ENCODE measurements at regions of chr4 and their contacts with region 1.

Region 1: DNA sequence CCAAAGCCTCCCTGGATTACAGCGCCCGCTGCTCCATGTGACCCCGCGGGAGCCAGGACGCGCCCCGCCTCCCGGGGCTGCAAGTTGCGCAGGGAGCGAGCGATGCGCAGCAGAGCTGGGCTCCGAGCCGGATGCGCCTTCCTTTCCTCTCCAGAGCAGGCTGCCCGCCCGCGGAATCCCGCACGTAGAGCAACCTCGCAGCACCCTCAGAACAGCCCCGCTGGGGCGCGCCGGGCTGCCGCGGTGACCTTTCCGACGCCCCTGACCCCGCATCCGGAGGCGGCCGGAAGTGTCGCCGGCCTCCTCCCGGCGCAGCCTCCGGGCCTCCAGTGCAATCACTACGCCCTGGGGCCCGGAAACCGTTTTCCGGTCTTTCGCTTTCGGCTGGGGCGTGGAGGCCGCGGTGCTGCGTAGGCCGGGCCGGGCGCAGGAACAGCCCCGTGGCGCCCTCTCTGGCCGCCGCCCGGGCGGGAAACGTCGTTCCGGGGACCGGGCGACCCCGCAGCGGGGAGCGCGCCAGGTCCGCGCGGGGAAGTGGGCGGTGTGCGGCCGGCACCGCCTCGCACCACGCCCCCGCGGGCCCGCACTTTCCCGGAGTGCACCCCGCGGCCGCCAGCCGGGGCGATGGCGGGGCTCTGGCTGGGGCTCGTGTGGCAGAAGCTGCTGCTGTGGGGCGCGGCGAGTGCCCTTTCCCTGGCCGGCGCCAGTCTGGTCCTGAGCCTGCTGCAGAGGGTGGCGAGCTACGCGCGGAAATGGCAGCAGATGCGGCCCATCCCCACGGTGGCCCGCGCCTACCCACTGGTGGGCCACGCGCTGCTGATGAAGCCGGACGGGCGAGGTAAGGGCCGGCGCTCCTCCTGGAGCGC is at the start of gene CYP4V2:
- DNase-seq: peak; percentile 91
- H3K4me3 ChIP-seq: peak within 1 kb of the TSS; percentile 79 to 89 (median 82)
- H3K27ac ChIP-seq: peak within 1 kb of the TSS; percentile 93 to 99 (median 98)
- H3K4me1 ChIP-seq: peaks cover 0 to 40% (median 31%) of the 10 kb centered on the region in 4 donors
- H3K27me3 ChIP-seq: no peaks in the 10 kb centered on the region
- CTCF ChIP-seq: peak in 1 of 4 experiments; percentile 6
- EP300 ChIP-seq: peak in 1 of 4 donors; percentile 4
- POLR2A ChIP-seq: peak; percentile 46 to 67
- total RNA-seq, gene CYP4V2: 30.0 to 75.3 (median 34.7) TPM

Region 2: GRCh38 chr4:186144142-186144955 is 47.1 kb before region 1 on chr4:
- intact Hi-C with region 1: loop called (anchors 2 kb)
- DNase-seq: peak; percentile 79
- H3K4me3 ChIP-seq: peak overlapping the region; percentile 55 to 70 (median 64)
- H3K27ac ChIP-seq: peak overlapping the region; percentile 88 to 94 (median 88)
- H3K4me1 ChIP-seq: peaks cover 0 to 16% (median 6%) of the 10 kb centered on the region in 4 donors
- H3K27me3 ChIP-seq: no peaks in the 10 kb centered on the region
- CTCF ChIP-seq: peak; percentile 21 to 52 (median 36)
- EP300 ChIP-seq: no peak
- POLR2A ChIP-seq: no peak

Region 3: DNA sequence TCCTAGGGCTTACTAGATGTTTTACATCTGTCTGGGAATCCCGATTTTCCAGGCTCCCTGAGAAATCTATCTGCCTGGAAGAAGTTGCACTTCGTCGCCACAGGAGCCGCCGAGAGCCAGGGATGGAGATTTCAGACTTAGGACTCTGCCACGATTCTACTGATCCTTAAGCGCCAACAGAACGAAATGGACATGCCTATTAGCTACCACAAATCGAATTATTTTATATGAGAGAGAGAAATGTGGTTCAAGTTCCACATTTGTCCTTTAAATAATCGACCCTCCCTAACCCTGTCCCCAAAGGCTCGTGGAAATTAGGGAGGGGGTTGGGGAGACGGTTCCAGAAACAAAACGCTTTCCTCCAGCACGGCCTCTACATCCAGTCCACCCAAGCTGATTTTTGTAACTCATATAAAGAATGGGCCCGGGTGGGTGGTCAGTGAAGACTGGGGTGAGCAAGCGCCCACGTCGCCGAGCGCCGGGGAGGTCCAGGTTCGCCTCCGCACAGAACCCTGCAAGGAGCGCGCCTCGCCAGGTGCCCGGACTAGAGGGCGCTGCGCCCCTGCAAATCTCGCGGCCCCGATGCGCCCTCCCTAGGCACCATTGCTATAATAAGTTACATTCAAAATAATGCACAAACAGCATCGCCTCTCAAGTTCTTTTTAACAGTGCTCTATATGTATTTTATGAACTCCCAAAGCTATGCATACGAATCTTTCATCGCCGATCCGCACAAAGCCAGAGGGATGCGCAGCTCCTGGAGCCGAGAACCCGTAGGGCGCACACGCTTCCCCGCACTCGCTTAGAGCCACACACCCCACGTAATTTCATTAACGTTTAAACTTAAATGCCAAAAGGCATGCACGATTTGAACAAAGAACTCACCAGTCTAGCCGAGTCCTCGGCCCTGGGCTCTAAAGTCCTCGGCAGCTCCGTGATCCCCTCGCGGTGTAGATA is 534.3 kb after region 1 on chr4:
- intact Hi-C with region 1: loop called (anchors 10 kb)
- DNase-seq: peak; percentile 90
- H3K4me3 ChIP-seq: peak overlapping the region; percentile 73 to 91 (median 88)
- H3K27ac ChIP-seq: peak overlapping the region; percentile 87 to 97 (median 92)
- H3K4me1 ChIP-seq: peaks cover 0 to 43% (median 16%) of the 10 kb centered on the region in 4 donors
- H3K27me3 ChIP-seq: no peaks in the 10 kb centered on the region
- CTCF ChIP-seq: peak; percentile 9 to 54 (median 24)
- EP300 ChIP-seq: no peak
- POLR2A ChIP-seq: no peak

Measured in sigmoid colon (tissue), 7 donors.